ENCODE measurements at regions of chr1 and their contacts with region 1.

Region 1: DNA sequence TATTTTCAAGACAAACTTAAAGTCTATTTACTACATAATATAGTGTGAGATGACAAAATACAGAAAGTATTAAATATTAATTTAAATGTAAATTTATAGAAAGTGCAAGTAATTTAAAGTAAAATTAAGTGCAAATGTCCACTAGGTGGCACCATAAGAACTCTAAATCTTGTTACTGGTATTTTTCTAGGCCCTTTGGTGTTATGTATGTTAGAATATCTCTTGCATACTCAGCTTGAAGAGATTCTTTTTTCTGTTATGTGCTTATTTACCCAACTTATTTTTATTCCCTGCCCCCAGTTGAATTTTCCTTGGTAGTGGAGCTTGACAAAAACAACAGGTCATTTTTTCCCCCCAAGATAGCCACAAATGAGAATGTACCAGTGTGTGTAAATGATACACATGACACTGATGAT is 71.5 kb downstream of the RPS6KC1 start:
- DNase-seq: no peak
- H3K4me3 Mint-ChIP-seq: no peak overlapping the region
- H3K27ac Mint-ChIP-seq: no peak overlapping the region
- H3K4me1 Mint-ChIP-seq: peaks cover 2% of the 10 kb centered on the region
- H3K27me3 Mint-ChIP-seq: no peaks in the 10 kb centered on the region

Region 2: GRCh38 chr1:213374369-213374768 is 251.8 kb after region 1 on chr1:
- CTCF ChIA-PET with region 1: no interaction called
- POLR2A ChIA-PET with region 1: no interaction called
- intact Hi-C with region 1: loop called (anchors 5 kb)
- DNase-seq: peak; percentile 68
- H3K4me3 Mint-ChIP-seq: no peak overlapping the region
- H3K27ac Mint-ChIP-seq: no peak overlapping the region
- H3K4me1 Mint-ChIP-seq: no peaks in the 10 kb centered on the region
- H3K27me3 Mint-ChIP-seq: no peaks in the 10 kb centered on the region